Heart left ventricle (tissue), 16 donors: ENCODE measurements at regions of chr1 and their contacts with region 1.

Region 1: GRCh38 chr1:18883636-18884418 is 18.5 kb downstream of the ALDH4A1 start:
- DNase-seq: peak; percentile 59 to 85 (median 71)
- ATAC-seq: peak; percentile 28 to 78 (median 66)
- H3K4me3 ChIP-seq: no peak overlapping the region
- H3K27ac ChIP-seq: no peak overlapping the region
- H3K4me1 ChIP-seq: peaks cover 0 to 5% (median 0%) of the 10 kb centered on the region in 12 donors
- H3K27me3 ChIP-seq: no peaks in the 10 kb centered on the region
- CTCF ChIP-seq: peak; percentile 81 to 94 (median 90)
- POLR2A ChIP-seq: no peak

Region 2: GRCh38 chr1:19087737-19088594 is 204.1 kb after region 1 on chr1:
- intact Hi-C with region 1: loop called in 1 of 10 experiments (anchors 5 kb)
- DNase-seq: no peak
- ATAC-seq: no peak
- H3K4me3 ChIP-seq: no peak overlapping the region
- H3K27ac ChIP-seq: no peak overlapping the region
- H3K4me1 ChIP-seq: peaks cover 0 to 17% (median 5%) of the 10 kb centered on the region in 12 donors
- H3K27me3 ChIP-seq: no peaks in the 10 kb centered on the region
- CTCF ChIP-seq: no peak
- POLR2A ChIP-seq: no peak

Region 3: DNA sequence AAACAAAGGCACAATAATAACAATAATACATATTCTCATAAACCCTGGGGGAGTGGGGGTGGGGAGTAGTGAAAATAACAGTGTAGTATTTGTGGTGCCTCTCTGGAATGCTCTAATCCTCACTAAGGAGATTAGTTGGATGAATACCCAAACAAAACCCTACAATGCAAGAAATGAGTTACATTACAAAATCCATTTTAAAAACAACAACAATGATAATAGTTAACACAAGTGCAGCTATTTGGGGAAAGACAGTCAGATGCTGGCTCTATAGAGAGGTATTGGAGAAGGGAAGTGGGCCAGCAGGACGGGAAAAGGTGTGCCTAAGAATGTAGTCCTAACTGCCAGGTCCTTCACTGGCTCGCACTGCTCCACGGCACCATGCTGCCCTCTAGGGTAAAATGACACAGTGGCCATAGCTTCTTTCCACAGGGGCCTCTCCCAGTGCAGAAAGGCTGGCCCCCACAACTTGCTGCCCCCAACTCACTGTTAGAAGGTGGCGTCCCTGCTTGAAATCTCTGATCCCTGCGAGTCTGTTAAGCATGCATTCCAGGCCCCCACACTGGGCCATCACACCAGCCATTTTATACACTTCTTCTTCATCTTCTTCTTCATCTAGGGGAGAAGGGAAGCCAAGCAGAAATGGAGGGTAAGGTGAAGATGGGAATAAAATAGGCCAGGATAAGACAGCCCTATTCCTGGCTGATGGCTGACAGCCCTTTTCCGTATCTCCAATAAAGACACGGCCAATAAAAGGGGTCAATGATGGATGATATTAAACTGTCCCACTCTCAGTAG is 212.4 kb after region 1 on chr1:
- intact Hi-C with region 1: loop called in 4 of 10 experiments (anchors 1 to 5 kb)
- DNase-seq: peak in 2 of 5 donors; percentile 47 to 49
- ATAC-seq: peak; percentile 64 to 85 (median 79)
- H3K4me3 ChIP-seq: no peak overlapping the region
- H3K27ac ChIP-seq: peak overlapping the region in 1 of 12 donors; percentile 20
- H3K4me1 ChIP-seq: peaks cover 0 to 14% (median 0%) of the 10 kb centered on the region in 12 donors
- H3K27me3 ChIP-seq: no peaks in the 10 kb centered on the region
- CTCF ChIP-seq: peak; percentile 35 to 70 (median 58)
- POLR2A ChIP-seq: no peak

Region 4: GRCh38 chr1:19232526-19232851 is 348.7 kb after region 1 on chr1:
- intact Hi-C with region 1: loop called in 1 of 10 experiments (anchors 10 kb)
- DNase-seq: peak in 4 of 5 donors; percentile 39 to 72 (median 56)
- ATAC-seq: peak; percentile 82 to 93 (median 92)
- H3K4me3 ChIP-seq: no peak overlapping the region
- H3K27ac ChIP-seq: peak overlapping the region in 8 of 12 donors; percentile 31 to 79 (median 52)
- H3K4me1 ChIP-seq: peaks cover 0 to 23% (median 9%) of the 10 kb centered on the region in 12 donors
- H3K27me3 ChIP-seq: no peaks in the 10 kb centered on the region
- CTCF ChIP-seq: peak in 3 of 12 donors; percentile 22 to 38 (median 22)
- POLR2A ChIP-seq: no peak